PC-9 (cell line): ENCODE measurements at regions of chr7 and their contacts with region 1.

Region 1: GRCh38 chr7:78587443-78588044 is 789.0 kb downstream of the PHTF2 start:
- DNase-seq: peak in 1 of 2 experiments; percentile 18
- H3K4me3 ChIP-seq: no peak overlapping the region
- H3K27ac ChIP-seq: no peak overlapping the region
- H3K4me1 ChIP-seq: no peaks in the 10 kb centered on the region
- H3K27me3 ChIP-seq: no peaks in the 10 kb centered on the region
- CTCF ChIP-seq: peak; percentile 53

Region 2: GRCh38 chr7:78562191-78562590 is 25.4 kb before region 1 on chr7:
- CTCF ChIA-PET with region 1: no interaction called
- POLR2A ChIA-PET with region 1: no interaction called
- intact Hi-C with region 1: no loop called
- DNase-seq: no peak
- H3K4me3 ChIP-seq: no peak overlapping the region
- H3K27ac ChIP-seq: no peak overlapping the region
- H3K4me1 ChIP-seq: no peaks in the 10 kb centered on the region
- H3K27me3 ChIP-seq: no peaks in the 10 kb centered on the region
- CTCF ChIP-seq: no peak

Region 3: DNA sequence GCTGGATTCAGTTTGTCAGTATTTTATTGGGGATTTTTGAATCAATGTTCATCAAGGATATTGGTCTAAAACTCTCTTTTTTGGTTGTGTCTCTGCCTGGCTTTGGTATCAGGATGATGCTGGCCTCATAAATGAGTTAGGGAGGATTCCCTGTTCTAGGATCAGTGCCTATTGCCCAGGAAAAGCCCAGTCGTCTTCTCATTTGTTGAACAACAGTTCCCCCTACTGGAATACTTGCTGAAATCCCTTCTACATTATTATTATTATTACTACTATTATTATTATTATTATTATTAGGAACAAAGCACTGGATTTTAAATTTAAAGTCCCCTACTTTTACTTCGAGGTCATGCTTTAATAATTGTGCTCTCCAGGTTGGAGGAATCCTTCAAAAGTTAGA is 337.0 kb after region 1 on chr7:
- CTCF ChIA-PET with region 1: no interaction called
- POLR2A ChIA-PET with region 1: no interaction called
- intact Hi-C with region 1: loop called (anchors 2 kb)
- DNase-seq: no peak
- H3K4me3 ChIP-seq: no peak overlapping the region
- H3K27ac ChIP-seq: no peak overlapping the region
- H3K4me1 ChIP-seq: no peaks in the 10 kb centered on the region
- H3K27me3 ChIP-seq: no peaks in the 10 kb centered on the region
- CTCF ChIP-seq: no peak; the same call in 1 of the 2 replicates